K562 (cell line): ENCODE measurements at regions of chr1 and their contacts with region 1.

Region 1: GRCh38 chr1:197915862-197916499 is 1.2 kb upstream of the LHX9 start:
- DNase-seq: peak in 3 of 4 experiments; percentile 47 to 50 (median 48)
- ATAC-seq: peak; percentile 67
- H3K4me3 ChIP-seq: peak overlapping the region; percentile 20
- H3K27ac ChIP-seq: no peak overlapping the region
- H3K4me1 ChIP-seq: peaks cover 10 to 44% of the 10 kb centered on the region in 2 experiments; a peak in 4 of 5 replicates
- H3K27me3 ChIP-seq: peaks cover 78 to 93% of the 10 kb centered on the region in 2 experiments
- CTCF ChIP-seq: peak; percentile 47 to 59 (median 48)
- EP300 ChIP-seq: no peak
- POLR2A ChIP-seq: no peak
- RAD21 ChIP-seq: peak; percentile 30 to 53

Region 2: DNA sequence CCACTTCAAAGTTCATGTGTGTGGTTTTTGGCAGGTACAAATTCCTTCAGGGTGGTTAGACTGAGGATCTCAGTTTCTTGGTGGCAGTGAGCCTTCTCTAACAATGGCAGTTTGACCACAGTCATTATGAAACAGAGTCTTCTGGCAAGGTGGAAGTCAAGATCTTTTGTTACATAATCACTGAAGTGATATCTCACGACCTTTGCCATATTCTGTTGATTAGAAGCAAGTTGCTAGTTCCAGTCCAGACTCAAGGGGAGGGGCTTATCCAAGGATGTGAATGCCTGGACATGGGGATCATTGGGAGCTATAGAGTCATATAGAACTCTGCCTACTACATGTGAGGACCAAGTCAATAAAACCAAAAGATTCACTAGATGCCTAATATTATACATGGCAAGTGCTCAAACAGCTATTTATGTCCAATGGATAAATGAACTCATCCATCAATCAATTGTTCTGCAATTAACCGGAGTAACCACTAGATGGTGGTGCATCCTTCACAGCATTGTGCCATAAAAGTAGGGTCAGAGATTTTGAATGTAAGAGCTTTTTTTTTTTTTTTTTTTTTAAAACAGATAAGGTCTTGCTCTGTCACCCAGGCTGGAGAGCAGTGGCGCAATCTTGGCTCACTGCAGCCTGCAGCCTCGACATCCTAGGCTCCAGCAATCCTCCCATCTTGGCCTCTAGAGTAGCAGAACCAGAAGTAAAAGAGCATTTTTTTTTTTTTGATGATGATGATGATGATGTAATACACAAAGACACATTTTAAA is 516.0 kb before region 1 on chr1:
- CTCF ChIA-PET with region 1: no interaction called
- POLR2A ChIA-PET with region 1: no interaction called
- in situ Hi-C with region 1: no loop called
- intact Hi-C with region 1: loop called (anchors 5 kb)
- DNase-seq: peak; percentile 29 to 66 (median 49)
- ATAC-seq: peak; percentile 96
- H3K4me3 ChIP-seq: no peak overlapping the region
- H3K27ac ChIP-seq: no peak overlapping the region
- H3K4me1 ChIP-seq: no peaks in the 10 kb centered on the region
- H3K27me3 ChIP-seq: peaks cover 3 to 11% of the 10 kb centered on the region in 2 experiments; a peak in 2 of 5 replicates
- CTCF ChIP-seq: peak; percentile 60 to 76 (median 68)
- EP300 ChIP-seq: no peak
- POLR2A ChIP-seq: no peak
- RAD21 ChIP-seq: peak; percentile 74 to 81

Region 3: GRCh38 chr1:197902454-197903195 is 13.4 kb before region 1 on chr1 and contains the start of gene C1orf53:
- CTCF ChIA-PET with region 1: no interaction called
- POLR2A ChIA-PET with region 1: interaction called, 13 read pairs
- in situ Hi-C with region 1: no loop called
- intact Hi-C with region 1: no loop called
- DNase-seq: peak; percentile 93 to 98 (median 96)
- ATAC-seq: peak; percentile 99
- H3K4me3 ChIP-seq: peak within 1 kb of the TSS; percentile 60
- H3K27ac ChIP-seq: peak within 1 kb of the TSS; percentile 89
- H3K4me1 ChIP-seq: peaks cover 5 to 10% of the 10 kb centered on the region in 2 experiments; a peak in 2 of 5 replicates
- H3K27me3 ChIP-seq: peaks cover 2 to 3% of the 10 kb centered on the region in 2 experiments; a peak in 3 of 5 replicates
- CTCF ChIP-seq: no peak
- EP300 ChIP-seq: no peak; the same call in 1 of the 2 replicates
- POLR2A ChIP-seq: peak; percentile 95
- RAD21 ChIP-seq: peak in 1 of 2 experiments; percentile 29; a peak in 3 of 4 replicates
- polyA plus RNA-seq, gene C1orf53: 1.8 to 2.5 TPM